Tibial artery (tissue), 4 donors: ENCODE measurements at regions of chr7 and their contacts with region 1.

Region 1: DNA sequence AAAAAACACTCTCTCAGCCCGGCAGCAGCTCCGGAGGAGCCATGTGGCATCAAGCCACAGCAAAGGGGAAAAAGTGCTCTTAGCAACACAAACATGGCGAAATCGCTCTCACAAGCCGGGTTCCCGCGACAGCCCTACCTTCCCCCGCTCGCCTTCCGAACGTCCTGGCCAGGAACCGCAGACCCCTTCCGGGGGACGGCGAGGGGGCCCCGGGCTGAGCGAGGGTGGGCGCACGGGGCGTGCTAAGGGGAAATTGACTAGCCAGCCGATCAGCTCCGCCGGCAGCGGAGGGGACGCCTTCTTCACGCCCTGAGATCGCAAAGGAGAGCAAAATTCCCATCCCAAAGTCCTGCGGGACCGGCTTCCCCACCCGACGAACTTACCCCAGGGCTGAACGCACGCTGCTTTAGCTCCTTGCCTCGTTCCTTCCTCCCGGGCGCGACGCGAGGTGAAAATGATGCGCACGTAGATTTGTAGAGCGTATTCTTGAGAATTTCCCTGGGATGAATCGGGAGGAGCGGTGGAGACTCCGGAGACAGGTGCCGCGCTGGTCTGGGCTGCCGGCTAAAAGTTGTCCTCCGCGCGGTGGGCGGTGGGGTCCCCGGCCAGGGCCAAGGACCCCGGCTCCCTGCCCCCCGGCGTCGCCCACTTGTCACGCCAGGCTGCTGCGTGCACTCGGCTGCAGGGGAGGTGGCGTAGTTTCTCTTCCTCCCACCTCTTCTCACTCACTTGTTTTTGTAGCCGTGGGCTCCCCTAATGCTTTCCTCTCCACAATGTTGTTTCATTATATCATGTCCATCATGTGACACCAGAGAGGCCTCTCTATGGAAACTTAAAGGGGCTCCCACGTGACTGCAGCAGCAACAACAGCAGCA is 220.1 kb upstream of the MKLN1 start:
- DNase-seq: peak; percentile 87 to 90
- H3K4me3 ChIP-seq: peak overlapping the region; percentile 80 to 86
- H3K27ac ChIP-seq: peak overlapping the region; percentile 99
- H3K4me1 ChIP-seq: peaks cover 0 to 53% (median 16%) of the 10 kb centered on the region in 4 donors
- H3K27me3 ChIP-seq: no peaks in the 10 kb centered on the region
- CTCF ChIP-seq: peak in 1 of 2 experiments; percentile 17

Region 2: DNA sequence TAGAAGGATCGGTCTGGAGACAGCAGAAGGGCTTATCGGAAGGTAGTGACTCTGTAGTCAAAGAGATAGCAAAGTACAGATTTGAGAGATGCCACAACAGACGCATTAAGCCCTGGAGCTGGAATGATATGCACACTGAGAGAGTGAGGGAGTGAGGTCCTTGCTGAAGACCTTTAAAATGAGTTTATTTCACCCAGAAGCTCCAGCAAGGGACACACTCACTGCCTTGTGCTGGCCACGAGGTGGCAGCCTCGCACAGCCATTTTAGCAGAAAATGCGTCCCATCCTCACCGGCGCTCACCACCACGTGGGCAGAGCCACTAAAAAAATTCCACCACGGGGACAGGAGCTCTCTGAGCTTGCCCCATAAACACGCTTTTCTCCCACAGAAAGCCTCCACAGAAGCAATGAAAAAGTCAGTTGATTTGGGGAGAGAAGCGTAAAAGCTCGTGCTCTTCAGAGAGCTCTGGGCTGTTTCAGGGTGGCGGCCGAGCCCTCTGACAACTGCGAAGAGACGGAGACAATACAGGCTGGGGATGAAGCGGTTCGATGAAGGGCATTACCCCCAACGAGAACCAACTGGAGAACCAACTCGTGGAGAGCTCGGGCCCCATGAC is 210.6 kb before region 1 on chr7:
- intact Hi-C with region 1: loop called (anchors 5 kb)
- DNase-seq: no peak
- H3K4me3 ChIP-seq: no peak overlapping the region
- H3K27ac ChIP-seq: peak overlapping the region; percentile 73 to 82
- H3K4me1 ChIP-seq: peaks cover 0 to 80% (median 61%) of the 10 kb centered on the region in 4 donors
- H3K27me3 ChIP-seq: no peaks in the 10 kb centered on the region
- CTCF ChIP-seq: peak; percentile 76 to 82

Region 3: GRCh38 chr7:131250331-131250730 is 142.8 kb after region 1 on chr7:
- intact Hi-C with region 1: loop called (anchors 10 kb)
- DNase-seq: no peak
- H3K4me3 ChIP-seq: no peak overlapping the region
- H3K27ac ChIP-seq: no peak overlapping the region
- H3K4me1 ChIP-seq: peaks cover 0 to 19% (median 4%) of the 10 kb centered on the region in 4 donors
- H3K27me3 ChIP-seq: no peaks in the 10 kb centered on the region
- CTCF ChIP-seq: no peak

Region 4: DNA sequence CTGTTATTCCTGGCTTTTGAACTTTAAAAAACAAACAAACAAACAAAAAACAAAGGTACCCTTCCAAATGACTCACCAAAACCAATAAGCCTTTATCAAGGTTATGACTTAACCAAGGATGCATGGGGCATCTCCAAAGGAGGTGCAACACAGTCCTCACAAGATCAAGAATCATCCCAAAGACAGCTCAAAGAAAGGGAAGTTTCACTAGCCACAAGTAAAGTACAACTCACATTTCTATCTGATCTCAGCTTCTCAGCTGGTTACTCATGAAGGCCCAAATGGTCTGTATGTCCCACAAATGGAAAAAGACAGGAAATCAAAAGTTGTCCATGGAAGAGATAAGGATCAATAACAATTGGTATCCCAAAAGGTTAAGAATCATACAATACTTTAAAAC is 214.1 kb after region 1 on chr7:
- intact Hi-C with region 1: loop called (anchors 5 kb)
- DNase-seq: no peak
- H3K4me3 ChIP-seq: no peak overlapping the region
- H3K27ac ChIP-seq: no peak overlapping the region
- H3K4me1 ChIP-seq: peaks cover 0 to 15% (median under 1%) of the 10 kb centered on the region in 4 donors
- H3K27me3 ChIP-seq: no peaks in the 10 kb centered on the region
- CTCF ChIP-seq: no peak

Region 5: DNA sequence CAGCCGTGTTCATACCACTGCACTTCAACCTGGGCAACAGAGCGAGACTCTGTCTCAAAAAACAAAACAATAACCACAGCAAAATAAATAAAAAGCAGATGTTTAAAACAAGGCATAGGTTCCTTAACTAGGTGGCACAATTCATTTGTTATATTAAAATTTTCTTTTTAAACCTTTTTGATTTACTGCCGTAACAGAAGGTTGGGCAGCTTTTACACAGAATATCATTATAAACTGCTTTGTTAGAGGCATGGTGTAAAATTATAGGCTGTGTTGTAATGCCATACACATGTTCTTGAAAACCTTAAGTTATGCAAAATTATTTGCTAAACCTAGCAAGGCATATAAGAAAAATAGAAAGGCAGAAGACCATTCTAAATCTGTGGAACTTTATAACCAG is 304.5 kb after region 1 on chr7:
- intact Hi-C with region 1: loop called (anchors 10 kb)
- DNase-seq: no peak
- H3K4me3 ChIP-seq: no peak overlapping the region
- H3K27ac ChIP-seq: no peak overlapping the region
- H3K4me1 ChIP-seq: peaks cover 0 to 24% (median 3%) of the 10 kb centered on the region in 4 donors
- H3K27me3 ChIP-seq: no peaks in the 10 kb centered on the region
- CTCF ChIP-seq: no peak